Naive thymus-derived CD4-positive, alpha-beta T cell (primary cell): ENCODE measurements at regions of chr12 and their contacts with region 1.

Region 1: DNA sequence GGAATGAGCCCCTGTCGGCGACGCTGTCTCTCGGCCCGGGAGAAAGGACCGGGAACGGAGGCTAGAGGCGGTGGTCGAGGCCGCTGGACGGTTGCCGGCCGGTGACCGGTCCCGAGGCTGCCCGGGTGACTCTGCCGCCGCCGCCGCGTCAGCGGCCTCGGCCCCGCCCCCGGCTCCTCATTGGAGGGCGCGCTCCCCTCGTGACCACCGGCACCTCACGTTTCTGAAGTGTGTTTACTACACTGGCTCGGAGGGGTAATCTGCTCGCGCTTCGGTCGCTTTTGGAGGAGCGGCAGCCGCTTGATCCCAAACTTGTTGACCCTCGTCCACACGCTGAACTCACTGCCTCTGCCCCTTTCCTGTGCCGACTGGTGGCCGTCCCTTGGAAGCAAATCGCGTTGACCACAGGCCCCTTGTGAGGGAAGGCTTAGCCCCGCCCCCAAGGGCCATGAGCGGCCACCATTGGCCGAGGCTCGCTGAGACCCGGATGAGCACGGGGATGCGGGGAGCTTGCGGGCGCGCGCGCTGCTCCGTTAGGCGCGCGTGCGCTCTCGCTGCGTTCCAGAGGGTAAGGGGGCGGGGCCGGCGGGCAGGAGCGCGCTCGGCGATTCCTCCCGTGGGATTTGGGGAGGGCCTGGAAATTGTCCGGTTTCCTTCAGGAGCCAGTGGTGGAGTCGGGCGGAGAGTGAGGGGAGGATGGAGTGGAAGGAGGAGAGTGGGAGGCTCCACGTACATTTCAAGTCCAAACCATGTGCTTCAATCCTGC is at the start of gene CRY1:
- DNase-seq: peak; percentile 87 to 98 (median 94)
- ATAC-seq: peak; percentile 90
- H3K4me3 ChIP-seq: peak within 1 kb of the TSS; percentile 85
- H3K4me3 Mint-ChIP-seq: no peak within 1 kb of the TSS
- H3K27ac ChIP-seq: peak within 1 kb of the TSS; percentile 99
- H3K27ac Mint-ChIP-seq: no peak within 1 kb of the TSS
- H3K4me1 ChIP-seq: peaks cover 16 to 18% of the 10 kb centered on the region in 2 donors
- H3K4me1 Mint-ChIP-seq: peaks cover 5 to 18% (median 11%) of the 10 kb centered on the region in 7 donors
- H3K27me3 ChIP-seq: no peaks in the 10 kb centered on the region
- H3K27me3 Mint-ChIP-seq: peaks cover 0 to 11% (median 5%) of the 10 kb centered on the region in 5 donors
- total RNA-seq, gene CRY1: 8.0 to 58.4 (median 33.4) TPM

Region 2: DNA sequence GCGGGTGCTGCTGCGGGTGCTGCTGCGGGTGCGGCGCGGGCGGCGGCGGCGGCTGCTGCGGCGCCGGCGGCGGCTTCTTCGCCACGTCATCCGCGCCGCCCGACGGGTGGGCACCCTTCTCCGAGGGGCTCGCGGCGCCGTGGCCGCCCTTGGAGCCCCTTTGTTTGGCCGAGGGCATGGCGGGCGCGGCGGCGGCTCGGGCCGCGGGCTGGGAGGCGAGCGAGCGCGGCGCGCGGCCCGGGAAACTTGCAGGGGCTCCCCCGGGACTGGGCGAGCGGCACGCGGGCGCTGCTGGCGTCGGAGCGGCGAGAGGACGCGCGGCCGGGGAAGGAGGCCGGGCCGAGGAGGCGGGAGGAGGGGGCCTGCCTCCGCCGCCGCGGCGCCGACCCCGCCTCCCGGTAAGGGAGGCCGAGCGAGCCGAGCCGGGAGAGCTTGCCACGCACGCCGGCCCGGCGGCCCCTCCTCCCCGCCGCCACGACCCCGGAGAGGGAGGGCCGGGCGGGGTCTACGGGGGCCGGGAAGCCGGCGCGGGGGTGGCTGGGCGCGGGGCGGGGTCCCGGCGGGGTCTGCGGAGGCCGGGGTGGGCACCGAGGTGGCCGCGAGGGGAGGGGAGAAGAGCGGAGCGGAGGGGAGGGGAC is 845.8 kb before region 1 on chr12 and contains the start of gene CKAP4:
- CTCF ChIA-PET with region 1: no interaction called
- POLR2A ChIA-PET with region 1: no interaction called
- intact Hi-C with region 1: loop called (anchors 5 kb)
- DNase-seq: peak; percentile 45 to 65 (median 55)
- ATAC-seq: peak; percentile 59
- H3K4me3 ChIP-seq: peak within 1 kb of the TSS; percentile 69
- H3K4me3 Mint-ChIP-seq: peak within 1 kb of the TSS; percentile 81 to 92 (median 86)
- H3K27ac ChIP-seq: peak within 1 kb of the TSS; percentile 80
- H3K27ac Mint-ChIP-seq: peak within 1 kb of the TSS; percentile 58 to 98 (median 94)
- H3K4me1 ChIP-seq: peaks cover 17 to 22% of the 10 kb centered on the region in 2 donors
- H3K4me1 Mint-ChIP-seq: peaks cover 13 to 37% (median 31%) of the 10 kb centered on the region in 7 donors
- H3K27me3 ChIP-seq: no peaks in the 10 kb centered on the region
- H3K27me3 Mint-ChIP-seq: peaks cover 0 to 19% (median 0%) of the 10 kb centered on the region in 5 donors
- total RNA-seq, gene CKAP4: 4.3 to 27.2 (median 13.0) TPM

Region 3: DNA sequence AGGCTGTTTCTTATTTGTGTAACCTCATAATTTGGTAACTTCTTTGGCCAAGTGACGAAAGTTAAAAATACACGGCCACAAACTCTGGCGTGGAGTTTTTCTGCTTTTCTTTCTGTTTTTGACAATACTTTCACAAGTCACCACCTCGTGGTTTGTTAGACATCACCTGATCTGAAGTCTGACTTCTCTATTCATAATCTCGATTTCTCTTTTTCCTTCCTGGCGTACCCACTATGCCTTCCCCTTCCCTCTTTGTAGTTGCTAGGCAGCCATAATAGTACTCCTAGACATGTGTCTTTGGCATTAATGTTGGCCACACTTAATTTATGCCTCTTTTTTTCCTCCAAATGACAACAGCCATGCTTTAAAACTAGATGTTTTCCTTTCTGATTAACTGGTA is 638.5 kb before region 1 on chr12:
- CTCF ChIA-PET with region 1: no interaction called
- POLR2A ChIA-PET with region 1: no interaction called
- intact Hi-C with region 1: no loop called
- DNase-seq: no peak
- ATAC-seq: peak; percentile 41
- H3K4me3 ChIP-seq: no peak overlapping the region
- H3K4me3 Mint-ChIP-seq: no peak overlapping the region
- H3K27ac ChIP-seq: no peak overlapping the region
- H3K27ac Mint-ChIP-seq: no peak overlapping the region
- H3K4me1 ChIP-seq: no peaks in the 10 kb centered on the region
- H3K4me1 Mint-ChIP-seq: peaks cover 0 to 6% (median 0%) of the 10 kb centered on the region in 7 donors
- H3K27me3 ChIP-seq: no peaks in the 10 kb centered on the region
- H3K27me3 Mint-ChIP-seq: no peaks in the 10 kb centered on the region

Region 4: GRCh38 chr12:106955377-106956047 is 138.1 kb before region 1 on chr12 and contains the start of gene TMEM263:
- CTCF ChIA-PET with region 1: interaction called, 3 read pairs
- POLR2A ChIA-PET with region 1: interaction called, 11 read pairs
- intact Hi-C with region 1: loop called (anchors 1 kb)
- DNase-seq: peak; percentile 78 to 91 (median 86)
- ATAC-seq: peak; percentile 90
- H3K4me3 ChIP-seq: peak within 1 kb of the TSS; percentile 94
- H3K4me3 Mint-ChIP-seq: peak within 1 kb of the TSS; percentile 88 to 99 (median 96)
- H3K27ac ChIP-seq: peak within 1 kb of the TSS; percentile 94
- H3K27ac Mint-ChIP-seq: peak within 1 kb of the TSS; percentile 93 to 97 (median 96)
- H3K4me1 ChIP-seq: peaks cover 8 to 10% of the 10 kb centered on the region in 2 donors
- H3K4me1 Mint-ChIP-seq: peaks cover 17 to 57% (median 38%) of the 10 kb centered on the region in 7 donors
- H3K27me3 ChIP-seq: no peaks in the 10 kb centered on the region
- H3K27me3 Mint-ChIP-seq: peaks cover 0 to 11% (median 0%) of the 10 kb centered on the region in 5 donors
- total RNA-seq, gene TMEM263: 20.0 to 45.5 (median 31.5) TPM

Region 5: DNA sequence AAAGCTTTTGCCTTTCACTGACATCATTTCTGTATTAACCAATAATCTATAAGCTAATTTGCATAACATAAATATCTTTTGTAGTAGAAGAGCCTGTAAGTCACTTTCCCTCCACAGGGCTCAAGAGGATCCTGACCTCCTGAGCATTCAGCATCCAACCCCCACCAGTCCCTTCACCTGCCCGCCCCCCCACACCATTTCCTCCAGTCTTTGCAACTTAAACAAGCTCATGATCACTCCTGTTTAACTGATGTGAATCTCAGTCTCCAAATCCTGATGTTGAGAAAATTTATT is 11.8 kb after region 1 on chr12:
- CTCF ChIA-PET with region 1: interaction called, 53 read pairs
- POLR2A ChIA-PET with region 1: interaction called, 4 read pairs
- intact Hi-C with region 1: loop called (anchors 1 kb)
- DNase-seq: no peak
- ATAC-seq: no peak
- H3K4me3 ChIP-seq: no peak overlapping the region
- H3K4me3 Mint-ChIP-seq: no peak overlapping the region
- H3K27ac ChIP-seq: no peak overlapping the region
- H3K27ac Mint-ChIP-seq: no peak overlapping the region
- H3K4me1 ChIP-seq: no peaks in the 10 kb centered on the region
- H3K4me1 Mint-ChIP-seq: peaks cover 0 to 3% (median 0%) of the 10 kb centered on the region in 7 donors
- H3K27me3 ChIP-seq: no peaks in the 10 kb centered on the region
- H3K27me3 Mint-ChIP-seq: peaks cover 0 to 17% (median 0%) of the 10 kb centered on the region in 5 donors

Region 6: DNA sequence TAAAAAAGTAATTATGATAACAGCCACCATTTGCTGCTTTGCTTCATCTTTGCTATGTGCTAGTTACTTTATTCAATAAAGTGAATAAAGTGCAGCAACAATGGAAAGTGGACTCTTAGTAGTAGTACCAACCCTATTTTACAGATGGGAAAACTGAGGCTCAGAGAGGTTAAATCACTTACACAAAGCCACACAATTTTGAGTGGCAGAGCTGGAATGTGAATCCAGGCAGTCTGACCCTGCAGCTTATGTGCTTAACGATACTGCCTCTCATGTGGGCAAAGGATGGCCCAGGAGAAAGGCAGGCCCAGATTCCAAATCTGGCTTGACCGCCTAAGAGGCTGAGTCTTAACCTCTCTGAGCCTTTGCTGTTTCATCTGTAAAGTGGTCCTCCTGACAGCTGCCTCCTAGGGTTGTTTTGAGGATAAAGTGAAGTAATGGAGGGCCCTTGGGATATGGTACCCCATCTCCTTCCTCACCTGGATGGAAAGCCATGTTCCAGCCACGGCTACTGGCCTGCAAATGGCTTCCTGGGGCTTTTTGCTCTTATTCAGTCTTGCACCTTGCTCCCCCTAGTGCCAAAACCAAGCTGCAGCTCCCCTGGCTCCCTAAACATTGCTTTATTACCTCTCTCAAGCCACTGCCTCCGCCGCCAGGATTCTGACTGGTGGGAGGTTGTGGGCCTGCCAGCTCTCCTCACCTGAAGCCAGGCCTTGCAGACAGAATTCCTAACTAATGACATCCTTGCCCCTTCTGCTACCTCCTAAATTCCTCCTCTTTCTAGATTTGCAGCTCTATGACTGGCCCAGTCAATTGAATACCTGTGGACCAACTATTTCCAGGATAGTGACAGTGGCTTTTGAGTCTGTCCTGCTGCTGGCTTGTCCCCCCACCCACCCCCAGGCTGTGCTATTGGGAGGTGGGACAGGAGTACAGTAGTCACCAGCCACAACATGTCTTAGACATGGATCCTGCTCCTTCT is 308.7 kb after region 1 on chr12:
- CTCF ChIA-PET with region 1: no interaction called
- POLR2A ChIA-PET with region 1: no interaction called
- intact Hi-C with region 1: loop called in 1 of 2 experiments (anchors 1 kb)
- DNase-seq: peak; percentile 16 to 69 (median 61)
- ATAC-seq: peak; percentile 78
- H3K4me3 ChIP-seq: no peak overlapping the region
- H3K4me3 Mint-ChIP-seq: peak overlapping the region in 4 of 10 donors; percentile 12 to 48 (median 24)
- H3K27ac ChIP-seq: no peak overlapping the region
- H3K27ac Mint-ChIP-seq: peak overlapping the region in 7 of 9 donors; percentile 34 to 90 (median 57)
- H3K4me1 ChIP-seq: no peaks in the 10 kb centered on the region
- H3K4me1 Mint-ChIP-seq: peaks cover 10 to 48% (median 26%) of the 10 kb centered on the region in 7 donors
- H3K27me3 ChIP-seq: no peaks in the 10 kb centered on the region
- H3K27me3 Mint-ChIP-seq: no peaks in the 10 kb centered on the region

Region 7: DNA sequence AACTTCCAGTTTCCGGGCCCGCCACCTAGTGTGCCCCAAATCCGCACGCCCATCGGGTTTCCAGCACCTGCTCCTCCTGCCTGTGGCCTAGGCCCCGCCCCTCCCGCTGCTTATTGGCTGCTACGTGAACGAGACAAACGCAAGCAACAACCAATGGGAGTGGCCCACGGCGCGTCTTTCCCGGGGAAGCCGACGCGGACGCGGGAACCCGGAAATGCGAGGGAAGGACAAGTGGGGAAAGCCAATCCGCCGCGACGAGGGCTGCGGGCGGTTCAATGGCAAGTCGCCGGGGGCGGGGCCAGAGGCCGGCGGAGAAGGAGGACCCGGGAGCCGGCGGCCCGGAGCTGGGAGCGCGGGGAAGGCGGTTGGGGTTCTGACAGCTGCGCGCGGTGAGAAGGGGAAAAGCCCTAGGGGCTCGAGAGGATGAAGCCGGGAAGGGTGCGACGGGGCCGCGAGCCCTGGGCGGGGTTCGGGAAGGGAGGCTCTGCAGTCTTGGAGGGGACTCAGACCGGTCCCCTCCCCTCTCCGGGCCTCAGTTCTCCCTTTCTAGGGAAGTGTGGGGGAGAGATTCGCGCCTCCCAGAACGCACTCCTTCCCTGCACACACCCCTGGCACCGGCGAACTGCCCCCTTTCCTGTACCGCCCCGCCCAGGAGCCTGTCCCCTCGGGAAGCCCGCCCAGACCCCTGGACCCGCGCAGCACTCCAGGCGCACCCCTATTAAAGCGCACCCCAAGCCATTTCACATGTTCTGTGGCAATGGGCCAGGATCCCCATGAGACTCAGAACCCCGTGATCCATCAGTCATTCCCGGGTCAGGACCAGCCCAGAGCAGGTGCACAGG is 1421.6 kb after region 1 on chr12 and contains the start of gene FICD:
- CTCF ChIA-PET with region 1: no interaction called
- POLR2A ChIA-PET with region 1: no interaction called
- intact Hi-C with region 1: loop called in 1 of 2 experiments (anchors 1 kb)
- DNase-seq: peak; percentile 93 to 99 (median 98)
- ATAC-seq: peak; percentile 96
- H3K4me3 ChIP-seq: peak within 1 kb of the TSS; percentile 81
- H3K4me3 Mint-ChIP-seq: peak within 1 kb of the TSS; percentile 91 to 97 (median 94)
- H3K27ac ChIP-seq: peak within 1 kb of the TSS; percentile 78
- H3K27ac Mint-ChIP-seq: peak within 1 kb of the TSS; percentile 89 to 95 (median 94)
- H3K4me1 ChIP-seq: peaks cover 8% of the 10 kb centered on the region in 2 donors
- H3K4me1 Mint-ChIP-seq: peaks cover 17 to 40% (median 22%) of the 10 kb centered on the region in 7 donors
- H3K27me3 ChIP-seq: no peaks in the 10 kb centered on the region
- H3K27me3 Mint-ChIP-seq: peaks cover 0 to 2% (median 0%) of the 10 kb centered on the region in 5 donors
- total RNA-seq, gene FICD: 2.8 to 9.7 (median 6.9) TPM